Motor neuron (in vitro differentiated cells): ENCODE measurements at regions of chr7 and their contacts with region 1.

Region 1: GRCh38 chr7:114663502-114663901 is 248.9 kb downstream of the FOXP2 start:
- ATAC-seq: peak in 4 of 8 experiments; percentile 13 to 64 (median 42)
- H3K4me3 ChIP-seq: no peak overlapping the region
- H3K27ac ChIP-seq: no peak overlapping the region
- H3K4me1 ChIP-seq: peaks cover 22 to 39% of the 10 kb centered on the region in 2 donors

Region 2: DNA sequence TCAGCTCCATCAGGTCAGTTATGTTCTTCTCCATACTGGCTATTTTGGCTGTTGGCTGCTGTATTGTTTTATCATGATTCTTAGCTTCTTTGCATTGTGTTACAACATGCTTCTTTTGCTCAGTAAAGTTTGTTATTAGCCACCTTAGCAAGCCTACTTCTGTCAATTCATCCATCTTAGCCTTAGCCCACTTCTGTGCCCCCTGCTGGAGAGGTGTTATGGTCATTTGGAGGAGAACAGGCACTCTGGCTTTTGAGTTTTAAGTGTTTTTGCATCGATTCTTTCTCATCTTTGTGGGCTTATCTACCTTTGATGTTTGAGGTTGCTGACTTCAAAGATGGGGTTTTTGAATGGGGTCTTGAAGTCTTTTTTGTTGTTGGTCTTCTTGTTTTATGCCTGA is 453.5 kb before region 1 on chr7:
- in situ Hi-C with region 1: no loop called
- ATAC-seq: no peak
- H3K4me3 ChIP-seq: no peak overlapping the region
- H3K27ac ChIP-seq: no peak overlapping the region
- H3K4me1 ChIP-seq: peaks cover 6 to 11% of the 10 kb centered on the region in 2 donors

Region 3: DNA sequence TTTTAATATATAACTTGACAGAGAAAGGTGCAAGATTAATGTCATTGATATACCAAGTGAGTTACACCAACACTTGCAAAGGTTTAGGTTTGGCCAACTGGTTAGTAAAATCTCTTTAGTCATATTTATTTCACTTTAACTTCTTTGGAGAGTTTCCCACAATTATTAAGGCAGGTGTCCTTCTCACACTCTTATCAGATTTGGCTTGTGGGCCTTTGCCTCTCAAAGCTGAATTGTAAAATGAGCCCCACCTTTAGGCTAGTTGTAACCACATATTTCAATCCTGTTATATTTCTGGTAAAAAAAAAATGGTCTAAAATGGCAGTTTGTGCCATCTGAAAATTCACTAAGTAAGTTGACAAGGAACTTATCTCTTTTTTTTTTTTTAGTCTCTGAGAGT is 275.5 kb before region 1 on chr7:
- in situ Hi-C with region 1: no loop called
- ATAC-seq: no peak
- H3K4me3 ChIP-seq: no peak overlapping the region
- H3K27ac ChIP-seq: no peak overlapping the region
- H3K4me1 ChIP-seq: no peaks in the 10 kb centered on the region

Region 4: DNA sequence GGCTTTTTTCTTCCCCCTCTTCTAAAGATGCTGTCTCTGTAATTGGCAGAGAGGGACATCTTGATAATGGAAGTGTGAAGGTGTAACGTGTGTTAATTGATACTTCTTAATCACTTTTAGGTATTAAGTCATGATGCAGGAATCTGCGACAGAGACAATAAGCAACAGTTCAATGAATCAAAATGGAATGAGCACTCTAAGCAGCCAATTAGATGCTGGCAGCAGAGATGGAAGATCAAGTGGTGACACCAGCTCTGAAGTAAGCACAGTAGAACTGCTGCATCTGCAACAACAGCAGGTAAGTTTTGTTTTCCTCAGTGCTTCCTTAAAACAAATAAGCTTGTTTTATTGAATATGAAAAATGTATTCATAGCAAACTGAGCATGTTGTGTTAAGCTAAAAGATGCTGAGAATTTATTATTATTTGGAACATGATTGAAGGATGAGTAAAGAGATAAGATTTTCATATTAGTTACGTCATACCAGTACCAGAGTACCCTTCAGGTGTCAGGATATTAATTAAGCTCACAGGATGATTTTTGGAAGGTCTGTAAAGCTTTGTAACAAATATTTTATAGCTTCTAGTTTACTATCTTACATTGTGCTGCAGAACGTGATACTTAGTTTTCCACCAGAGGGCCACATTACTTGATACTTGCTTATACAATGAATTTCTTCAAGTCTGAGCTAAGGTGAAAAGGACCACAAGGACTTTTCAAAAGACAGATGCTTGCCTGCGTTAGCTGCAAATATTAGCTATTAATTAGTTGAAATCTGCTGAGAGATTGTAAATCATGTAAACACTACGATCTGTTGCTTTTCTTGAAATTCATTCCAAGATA is 236.9 kb before region 1 on chr7:
- in situ Hi-C with region 1: loop called in 2 of 9 experiments (anchors 25 kb)
- ATAC-seq: peak in 5 of 8 experiments; percentile 45 to 66 (median 50)
- H3K4me3 ChIP-seq: no peak overlapping the region
- H3K27ac ChIP-seq: no peak overlapping the region
- H3K4me1 ChIP-seq: peaks cover 0 to 16% of the 10 kb centered on the region in 2 donors

Region 5: DNA sequence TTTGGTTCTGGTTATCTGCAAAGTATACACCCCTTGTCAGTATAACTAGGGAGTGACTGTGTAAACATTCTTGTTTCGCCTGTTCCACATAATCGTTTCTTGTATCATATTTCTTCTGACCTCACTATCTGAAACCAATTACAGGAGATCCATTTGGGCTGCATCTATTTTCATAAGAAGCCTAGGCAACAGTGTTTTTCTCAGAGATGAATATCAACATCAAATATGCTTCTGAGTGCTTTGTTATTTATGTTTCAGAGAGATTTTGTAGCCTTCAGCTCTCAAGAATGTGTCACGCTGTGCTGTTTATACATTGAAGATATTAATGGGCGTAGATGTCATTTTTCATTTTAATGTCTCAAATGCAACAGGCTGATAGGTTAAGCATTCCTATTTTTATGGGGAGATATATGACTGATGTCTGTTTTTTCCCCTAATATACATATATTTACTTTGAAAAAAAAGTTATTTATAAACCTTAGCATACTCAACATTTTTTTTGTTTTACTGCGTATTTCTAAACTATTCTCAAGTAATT is 133.4 kb before region 1 on chr7:
- in situ Hi-C with region 1: no loop called
- ATAC-seq: peak; percentile 45 to 91 (median 84)
- H3K4me3 ChIP-seq: no peak overlapping the region
- H3K27ac ChIP-seq: no peak overlapping the region
- H3K4me1 ChIP-seq: peaks cover 6 to 9% of the 10 kb centered on the region in 2 donors